ENCODE measurements at regions of chr11 and their contacts with region 1.

Region 1: GRCh38 chr11:7892840-7893254 is 38.2 kb downstream of the OR10A6 start:
- DNase-seq: no peak
- ATAC-seq: peak; percentile 76
- H3K4me3 ChIP-seq: no peak overlapping the region
- H3K27ac ChIP-seq: no peak overlapping the region
- H3K4me1 ChIP-seq: peaks cover 14% of the 10 kb centered on the region
- H3K27me3 ChIP-seq: no peaks in the 10 kb centered on the region; a peak in 1 of 4 replicates
- CTCF ChIP-seq: peak; percentile 59 to 79 (median 77); a peak in 5 of 6 replicates
- EP300 ChIP-seq: no peak
- POLR2A ChIP-seq: no peak
- RAD21 ChIP-seq: peak; percentile 73

Region 2: DNA sequence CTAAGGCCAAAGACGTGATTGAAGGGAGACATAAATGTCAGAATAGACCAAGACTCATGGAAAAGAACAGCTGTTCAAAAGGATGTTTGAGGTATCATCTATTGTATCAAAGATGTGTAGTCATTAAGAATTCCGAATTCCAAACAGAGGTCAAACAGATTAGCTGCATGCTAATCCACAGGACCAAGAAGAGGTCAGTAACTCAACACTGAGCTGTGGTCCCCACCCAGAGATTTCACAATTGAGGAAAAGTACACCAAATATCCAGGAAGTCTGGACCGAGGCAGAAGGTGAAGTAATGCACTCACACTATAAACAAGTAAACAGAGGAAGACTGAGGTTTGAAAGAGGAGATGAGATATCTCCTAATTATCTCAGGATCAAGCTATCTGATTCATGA is 66.5 kb before region 1 on chr11:
- CTCF ChIA-PET with region 1: no interaction called
- POLR2A ChIA-PET with region 1: no interaction called
- RAD21 ChIA-PET with region 1: no interaction called
- SMC1A ChIA-PET with region 1: no interaction called
- in situ Hi-C with region 1: no loop called
- intact Hi-C with region 1: no loop called
- DNase-seq: no peak
- ATAC-seq: no peak
- H3K4me3 ChIP-seq: no peak overlapping the region
- H3K27ac ChIP-seq: no peak overlapping the region
- H3K4me1 ChIP-seq: no peaks in the 10 kb centered on the region
- H3K27me3 ChIP-seq: no peaks in the 10 kb centered on the region
- CTCF ChIP-seq: no peak
- EP300 ChIP-seq: no peak
- POLR2A ChIP-seq: no peak
- RAD21 ChIP-seq: no peak

Region 3: DNA sequence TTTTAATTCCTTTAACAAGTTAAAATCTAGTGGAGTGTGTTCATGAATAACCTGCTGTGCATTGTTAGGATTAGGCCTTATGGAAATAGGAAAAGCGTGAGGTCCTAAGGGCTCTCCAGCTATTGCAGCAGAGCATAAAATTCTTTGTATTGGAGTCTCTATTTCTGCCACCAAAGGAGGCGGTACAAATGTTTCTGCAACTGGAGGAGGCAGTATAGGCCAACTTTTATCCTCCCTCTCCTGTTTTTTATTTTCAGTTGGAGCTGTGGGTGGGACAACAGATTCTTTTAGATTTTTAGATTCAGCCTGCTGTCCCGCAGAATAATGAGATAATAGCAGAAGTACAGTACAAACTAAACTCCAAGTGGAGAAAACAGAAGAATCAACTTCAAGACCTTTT is 12.1 kb after region 1 on chr11:
- CTCF ChIA-PET with region 1: interaction called, 11 read pairs
- POLR2A ChIA-PET with region 1: no interaction called
- RAD21 ChIA-PET with region 1: no interaction called
- SMC1A ChIA-PET with region 1: interaction called, 4 read pairs
- in situ Hi-C with region 1: no loop called
- intact Hi-C with region 1: no loop called
- DNase-seq: no peak
- ATAC-seq: no peak
- H3K4me3 ChIP-seq: no peak overlapping the region
- H3K27ac ChIP-seq: no peak overlapping the region
- H3K4me1 ChIP-seq: no peaks in the 10 kb centered on the region
- H3K27me3 ChIP-seq: peaks cover 0 to 2% of the 10 kb centered on the region in 2 experiments; a peak in 1 of 4 replicates
- CTCF ChIP-seq: no peak
- EP300 ChIP-seq: no peak
- POLR2A ChIP-seq: no peak
- RAD21 ChIP-seq: no peak